ENCODE measurements at regions of chr10 and their contacts with region 1.

Region 1: DNA sequence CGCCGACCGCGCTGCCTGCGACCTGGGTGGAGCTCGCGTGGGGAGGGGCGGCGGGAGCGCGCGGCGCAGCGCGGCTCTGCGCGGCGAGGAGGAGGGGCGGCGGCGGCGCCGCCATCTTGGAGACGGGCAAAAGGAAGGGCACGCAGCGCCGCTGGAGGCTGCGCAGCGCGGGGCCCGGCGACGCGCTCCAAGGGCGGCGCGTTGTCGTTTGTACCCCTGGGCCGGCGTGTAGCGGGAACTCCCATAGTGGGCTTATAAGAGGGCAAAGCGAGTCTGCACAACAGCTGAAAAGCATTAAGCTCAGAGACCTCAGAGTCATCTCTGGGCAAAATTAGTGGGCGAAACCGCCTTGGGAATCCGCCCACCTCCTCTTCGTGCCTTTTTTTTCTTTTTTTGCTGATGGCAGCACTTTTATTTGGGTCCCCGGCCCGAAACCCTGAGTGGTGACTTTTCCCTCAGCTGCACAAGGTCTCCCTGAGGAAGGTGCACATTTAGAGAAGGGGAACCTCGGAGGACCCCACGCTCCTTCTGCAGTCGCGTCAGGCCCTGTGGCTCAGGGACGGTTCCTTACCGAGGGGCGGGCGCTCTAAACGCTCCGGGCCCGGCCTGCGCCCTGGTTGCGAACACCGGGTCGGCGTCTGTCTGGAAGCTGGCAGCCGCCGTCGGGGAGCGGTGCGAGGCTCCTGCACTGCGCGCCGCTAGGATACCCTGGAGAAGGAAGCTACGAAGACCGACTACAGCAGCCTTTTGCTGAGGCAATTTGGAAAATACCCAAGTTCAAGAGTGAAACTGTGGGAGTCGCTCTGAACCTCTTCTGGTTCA is 428 bp upstream of the MCMBP start:
- DNase-seq: peak; percentile 87 to 89 (median 88)
- H3K4me3 ChIP-seq: peak overlapping the region; percentile 76 to 90
- H3K4me3 Mint-ChIP-seq: peak overlapping the region; percentile 86 to 92 (median 89)
- H3K27ac ChIP-seq: peak overlapping the region; percentile 85
- H3K27ac Mint-ChIP-seq: peak overlapping the region; percentile 91 to 96 (median 94)
- H3K4me1 ChIP-seq: peaks cover 46% of the 10 kb centered on the region
- H3K4me1 Mint-ChIP-seq: peaks cover 26 to 46% (median 37%) of the 10 kb centered on the region in 4 donors
- H3K27me3 ChIP-seq: no peaks in the 10 kb centered on the region
- H3K27me3 Mint-ChIP-seq: no peaks in the 10 kb centered on the region

Region 2: GRCh38 chr10:119596537-119597404 is 276.3 kb before region 1 on chr10 and contains the start of gene TIAL1:
- CTCF ChIA-PET with region 1: no interaction called
- POLR2A ChIA-PET with region 1: no interaction called
- intact Hi-C with region 1: loop called (anchors 1 kb)
- DNase-seq: peak; percentile 89 to 97 (median 91)
- H3K4me3 ChIP-seq: peak within 1 kb of the TSS; percentile 83 to 99
- H3K4me3 Mint-ChIP-seq: peak within 1 kb of the TSS; percentile 93 to 100 (median 99)
- H3K27ac ChIP-seq: peak within 1 kb of the TSS; percentile 98
- H3K27ac Mint-ChIP-seq: peak within 1 kb of the TSS; percentile 97 to 100 (median 99)
- H3K4me1 ChIP-seq: peaks cover 43% of the 10 kb centered on the region
- H3K4me1 Mint-ChIP-seq: peaks cover 37 to 57% (median 44%) of the 10 kb centered on the region in 4 donors
- H3K27me3 ChIP-seq: no peaks in the 10 kb centered on the region
- H3K27me3 Mint-ChIP-seq: no peaks in the 10 kb centered on the region
- total RNA-seq, gene TIAL1: 201 to 212 TPM

Region 3: GRCh38 chr10:119650692-119651513 is 222.2 kb before region 1 on chr10 and contains the start of gene BAG3:
- CTCF ChIA-PET with region 1: no interaction called
- POLR2A ChIA-PET with region 1: interaction called, 13 read pairs
- intact Hi-C with region 1: no loop called
- DNase-seq: peak; percentile 66 to 80 (median 68)
- H3K4me3 ChIP-seq: peak within 1 kb of the TSS; percentile 88 to 89
- H3K4me3 Mint-ChIP-seq: peak within 1 kb of the TSS; percentile 94 to 100 (median 96)
- H3K27ac ChIP-seq: peak within 1 kb of the TSS; percentile 87
- H3K27ac Mint-ChIP-seq: peak within 1 kb of the TSS; percentile 96 to 99 (median 96)
- H3K4me1 ChIP-seq: peaks cover 45% of the 10 kb centered on the region
- H3K4me1 Mint-ChIP-seq: peaks cover 36 to 45% (median 43%) of the 10 kb centered on the region in 4 donors
- H3K27me3 ChIP-seq: no peaks in the 10 kb centered on the region
- H3K27me3 Mint-ChIP-seq: peaks cover 0 to under 1% of the 10 kb centered on the region in 2 donors
- total RNA-seq, gene BAG3: 20.8 to 21.6 TPM

Region 4: GRCh38 chr10:119663866-119664616 is 209.0 kb before region 1 on chr10:
- CTCF ChIA-PET with region 1: no interaction called
- POLR2A ChIA-PET with region 1: interaction called, 20 read pairs
- intact Hi-C with region 1: no loop called
- DNase-seq: peak; percentile 65 to 78 (median 70)
- H3K4me3 ChIP-seq: peak overlapping the region; percentile 31 to 48
- H3K4me3 Mint-ChIP-seq: peak overlapping the region; percentile 75 to 91 (median 84)
- H3K27ac ChIP-seq: peak overlapping the region; percentile 64
- H3K27ac Mint-ChIP-seq: peak overlapping the region; percentile 90 to 98 (median 94)
- H3K4me1 ChIP-seq: peaks cover 40% of the 10 kb centered on the region
- H3K4me1 Mint-ChIP-seq: peaks cover 33 to 90% (median 48%) of the 10 kb centered on the region in 4 donors
- H3K27me3 ChIP-seq: no peaks in the 10 kb centered on the region
- H3K27me3 Mint-ChIP-seq: no peaks in the 10 kb centered on the region

Region 5: GRCh38 chr10:119859420-119860258 is 13.4 kb before region 1 on chr10:
- CTCF ChIA-PET with region 1: interaction called, 49 read pairs
- POLR2A ChIA-PET with region 1: interaction called, 27 read pairs
- intact Hi-C with region 1: loop called (anchors 1 kb)
- DNase-seq: peak in 4 of 5 donors; percentile 45 to 52 (median 50)
- H3K4me3 ChIP-seq: no peak overlapping the region
- H3K4me3 Mint-ChIP-seq: no peak overlapping the region
- H3K27ac ChIP-seq: no peak overlapping the region
- H3K27ac Mint-ChIP-seq: peak overlapping the region in 6 of 7 donors; percentile 12 to 74 (median 24)
- H3K4me1 ChIP-seq: peaks cover 36% of the 10 kb centered on the region
- H3K4me1 Mint-ChIP-seq: peaks cover 26 to 50% (median 39%) of the 10 kb centered on the region in 4 donors
- H3K27me3 ChIP-seq: no peaks in the 10 kb centered on the region
- H3K27me3 Mint-ChIP-seq: no peaks in the 10 kb centered on the region

Region 6: GRCh38 chr10:119892188-119893065 is 19.4 kb after region 1 on chr10 and contains the start of gene SEC23IP:
- CTCF ChIA-PET with region 1: interaction called, 7 read pairs
- POLR2A ChIA-PET with region 1: interaction called, 109 read pairs
- intact Hi-C with region 1: loop called (anchors 1 kb)
- DNase-seq: peak; percentile 84 to 93 (median 85)
- H3K4me3 ChIP-seq: peak within 1 kb of the TSS; percentile 95 to 98
- H3K4me3 Mint-ChIP-seq: peak within 1 kb of the TSS; percentile 91 to 100 (median 99)
- H3K27ac ChIP-seq: peak within 1 kb of the TSS; percentile 97
- H3K27ac Mint-ChIP-seq: peak within 1 kb of the TSS; percentile 97 to 100 (median 99)
- H3K4me1 ChIP-seq: peaks cover 42% of the 10 kb centered on the region
- H3K4me1 Mint-ChIP-seq: peaks cover 36 to 61% (median 48%) of the 10 kb centered on the region in 4 donors
- H3K27me3 ChIP-seq: no peaks in the 10 kb centered on the region
- H3K27me3 Mint-ChIP-seq: peaks cover 0 to under 1% of the 10 kb centered on the region in 2 donors
- total RNA-seq, gene SEC23IP: 68.7 to 70.0 TPM

Region 7: DNA sequence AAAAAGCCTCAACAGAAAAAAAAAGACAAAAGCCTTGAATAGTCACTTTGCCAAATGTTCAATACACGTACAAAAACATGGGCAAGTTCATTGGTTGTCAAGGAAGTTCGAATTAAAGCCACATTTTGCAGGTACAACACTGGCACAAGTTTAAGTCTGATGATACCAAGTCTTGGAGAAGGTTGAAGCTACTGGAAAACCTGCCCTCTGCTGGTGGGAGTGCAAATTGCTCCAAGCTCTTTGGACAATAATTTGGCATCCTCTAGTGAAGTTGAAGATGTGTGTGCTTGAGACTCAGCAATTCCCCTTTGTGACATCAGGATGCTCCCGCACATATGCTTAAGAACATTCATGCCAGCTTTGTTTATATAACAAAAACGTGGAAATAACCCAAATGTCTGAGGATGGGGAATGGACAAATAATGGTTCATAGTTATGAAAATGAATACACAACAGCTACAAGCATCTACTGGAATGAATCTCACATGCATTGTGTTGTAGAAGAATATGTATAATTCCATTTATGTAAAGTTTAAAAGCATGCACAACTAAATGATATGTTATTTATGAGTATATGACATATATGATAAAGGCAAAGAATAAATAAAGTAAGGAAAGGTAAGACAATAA is 464.0 kb after region 1 on chr10:
- CTCF ChIA-PET with region 1: no interaction called
- POLR2A ChIA-PET with region 1: no interaction called
- intact Hi-C with region 1: loop called (anchors 2 kb)
- DNase-seq: peak; percentile 14 to 42 (median 33)
- H3K4me3 ChIP-seq: no peak overlapping the region
- H3K4me3 Mint-ChIP-seq: no peak overlapping the region
- H3K27ac ChIP-seq: no peak overlapping the region
- H3K27ac Mint-ChIP-seq: no peak overlapping the region
- H3K4me1 ChIP-seq: no peaks in the 10 kb centered on the region
- H3K4me1 Mint-ChIP-seq: no peaks in the 10 kb centered on the region
- H3K27me3 ChIP-seq: no peaks in the 10 kb centered on the region
- H3K27me3 Mint-ChIP-seq: peaks cover 4 to 7% of the 10 kb centered on the region in 2 donors

Measured in CD4-positive, alpha-beta memory T cell (primary cell).